ENCODE measurements at regions of chr5 and their contacts with region 1.

Region 1: DNA sequence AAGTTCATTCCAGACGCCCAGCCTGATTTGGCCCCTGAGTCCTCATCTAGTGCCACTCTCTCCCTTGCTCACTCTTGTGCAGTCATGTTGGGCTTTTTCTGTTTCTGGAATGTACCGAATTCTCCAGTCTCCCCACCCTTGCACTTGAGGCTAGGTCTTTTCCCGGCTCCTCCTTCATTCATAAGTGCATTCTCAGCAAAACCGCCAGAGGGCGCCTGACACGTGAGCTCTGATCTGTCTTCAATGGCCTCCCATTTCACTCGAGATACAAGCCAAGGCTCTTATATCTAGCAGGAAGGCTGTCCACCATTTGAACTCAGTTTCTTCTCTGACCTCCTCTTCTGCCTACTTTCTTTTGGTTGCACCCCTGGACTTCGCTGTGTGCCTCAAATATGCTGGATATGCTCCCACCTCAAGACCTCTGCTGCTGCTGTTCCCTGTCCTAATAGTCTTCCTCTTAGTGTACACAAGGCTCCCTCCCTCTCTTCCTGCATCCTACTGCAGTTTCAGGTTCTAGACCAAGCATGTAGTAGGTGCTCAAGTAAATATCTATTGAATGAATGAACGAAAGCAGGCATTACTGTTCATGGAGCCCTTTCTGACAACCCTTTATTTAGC is 568.1 kb upstream of the WWC1 start:
- DNase-seq: peak; percentile 69 to 89
- H3K4me3 ChIP-seq: no peak overlapping the region
- H3K27ac ChIP-seq: no peak overlapping the region
- H3K4me1 ChIP-seq: peaks cover 0 to 5% (median 0%) of the 10 kb centered on the region in 4 donors
- H3K27me3 ChIP-seq: no peaks in the 10 kb centered on the region
- CTCF ChIP-seq: peak in 5 of 7 experiments; percentile 64 to 83 (median 79)
- EP300 ChIP-seq: no peak
- POLR2A ChIP-seq: no peak

Region 2: GRCh38 chr5:167835146-167835545 is 111.8 kb after region 1 on chr5:
- intact Hi-C with region 1: no loop called
- DNase-seq: no peak
- H3K4me3 ChIP-seq: no peak overlapping the region
- H3K27ac ChIP-seq: no peak overlapping the region
- H3K4me1 ChIP-seq: no peaks in the 10 kb centered on the region
- H3K27me3 ChIP-seq: no peaks in the 10 kb centered on the region
- CTCF ChIP-seq: no peak
- EP300 ChIP-seq: no peak
- POLR2A ChIP-seq: no peak

Region 3: GRCh38 chr5:168047043-168047668 is 323.8 kb after region 1 on chr5:
- intact Hi-C with region 1: loop called (anchors 10 kb)
- DNase-seq: peak; percentile 41 to 80
- H3K4me3 ChIP-seq: no peak overlapping the region
- H3K27ac ChIP-seq: no peak overlapping the region
- H3K4me1 ChIP-seq: peaks cover 0 to 13% (median 3%) of the 10 kb centered on the region in 4 donors
- H3K27me3 ChIP-seq: no peaks in the 10 kb centered on the region
- CTCF ChIP-seq: peak in 1 of 7 experiments; percentile 30
- EP300 ChIP-seq: no peak
- POLR2A ChIP-seq: no peak

Region 4: DNA sequence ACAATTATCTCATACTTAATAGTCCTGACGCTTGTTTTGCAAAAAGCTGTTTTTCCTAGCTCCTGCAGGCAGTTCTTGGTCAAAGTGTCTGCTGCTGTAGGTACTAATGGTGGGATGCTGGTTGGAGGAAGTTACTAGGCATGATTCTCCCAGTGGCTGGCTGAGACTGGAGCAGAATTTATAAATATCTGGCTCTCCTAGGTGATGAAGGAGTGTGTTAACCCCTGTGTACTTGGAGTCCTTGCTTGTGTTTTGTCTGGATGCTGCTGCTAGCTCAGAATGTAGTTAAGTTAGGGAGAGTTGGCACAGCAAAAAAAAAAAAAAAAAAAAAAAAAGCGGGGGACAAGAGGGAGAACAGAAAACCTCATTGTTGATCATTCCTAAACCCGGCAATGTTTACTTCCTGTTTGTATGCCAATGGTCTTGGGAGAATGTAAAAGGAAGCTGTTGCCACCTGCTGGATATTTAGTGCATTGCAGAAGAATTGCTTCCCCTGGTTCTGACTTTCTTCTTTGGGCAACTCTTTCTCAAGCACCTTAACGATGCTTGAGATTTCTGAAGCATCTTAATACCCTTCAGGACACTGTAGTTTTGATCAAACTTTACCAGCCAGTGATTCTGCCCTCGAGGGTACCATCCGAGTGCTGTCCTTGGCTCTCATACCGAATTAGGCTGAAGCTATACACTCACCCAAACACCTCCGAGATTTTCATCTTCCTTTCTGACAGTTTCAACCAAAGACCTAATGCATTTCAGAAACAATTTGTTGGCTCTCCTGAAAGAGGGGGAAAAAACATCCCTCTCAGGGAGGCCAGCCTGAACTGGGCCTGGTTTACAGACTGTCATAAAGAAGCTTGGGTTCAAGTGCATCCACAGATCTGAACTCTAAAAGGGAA is 496.4 kb after region 1 on chr5:
- intact Hi-C with region 1: loop called (anchors 5 kb)
- DNase-seq: peak; percentile 55 to 88
- H3K4me3 ChIP-seq: peak overlapping the region in 1 of 4 donors; percentile 17
- H3K27ac ChIP-seq: no peak overlapping the region
- H3K4me1 ChIP-seq: peaks cover 0 to 10% (median 3%) of the 10 kb centered on the region in 4 donors
- H3K27me3 ChIP-seq: peaks cover 0 to 6% (median 0%) of the 10 kb centered on the region in 3 donors
- CTCF ChIP-seq: peak in 5 of 7 experiments; percentile 83 to 97 (median 87)
- EP300 ChIP-seq: no peak
- POLR2A ChIP-seq: no peak